ENCODE measurements at regions of chr16 and their contacts with region 1.

Region 1: DNA sequence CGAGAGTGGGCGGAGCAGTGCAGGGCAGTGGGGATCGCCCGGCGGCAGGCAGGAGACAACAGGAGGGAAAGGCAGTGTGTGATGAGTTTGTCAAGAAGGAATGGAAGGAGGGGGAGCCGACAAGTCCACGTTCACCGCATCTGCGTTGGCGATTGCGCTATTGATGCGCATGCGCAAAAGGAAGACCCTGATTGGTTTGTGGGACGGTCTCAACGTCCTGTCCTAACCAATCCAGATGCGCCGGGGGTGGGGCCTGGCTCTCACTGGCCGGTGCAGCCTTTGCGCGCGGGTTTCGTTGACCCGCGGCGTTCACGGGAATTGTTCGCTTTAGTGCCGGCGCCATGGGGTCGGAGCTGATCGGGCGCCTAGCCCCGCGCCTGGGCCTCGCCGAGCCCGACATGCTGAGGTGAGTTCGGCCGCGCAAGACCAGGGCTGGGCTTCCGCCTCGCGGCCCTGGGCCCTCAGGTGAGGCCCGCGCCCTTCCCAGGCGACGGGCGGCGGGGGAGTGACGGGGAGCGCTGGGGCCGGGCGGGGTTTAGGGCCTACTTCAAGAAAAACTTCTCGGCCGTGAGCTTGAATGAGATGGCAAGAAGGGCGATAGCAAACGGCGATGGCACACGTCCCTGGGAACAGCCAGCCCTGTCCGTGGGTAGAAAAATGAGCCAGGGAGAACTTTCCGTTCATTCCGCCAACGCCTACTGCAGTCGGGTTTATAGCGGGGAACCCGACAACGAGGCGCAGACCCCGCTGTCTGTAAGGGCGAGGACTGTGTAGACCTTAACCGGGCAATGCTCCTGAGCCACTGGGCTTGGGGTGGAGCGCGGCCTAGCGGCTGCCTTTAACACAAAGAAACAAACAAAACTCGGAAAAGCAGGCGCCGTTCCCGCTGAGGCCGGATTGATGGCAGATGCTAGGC is at the start of gene ORC6:
- DNase-seq: peak; percentile 97
- ATAC-seq: peak; percentile 87
- H3K4me3 ChIP-seq: peak within 1 kb of the TSS; percentile 85 to 96 (median 92)
- H3K27ac ChIP-seq: peak within 1 kb of the TSS; percentile 89
- H3K4me1 ChIP-seq: peaks cover 64% of the 10 kb centered on the region
- H3K27me3 ChIP-seq: no peaks in the 10 kb centered on the region; a peak in 1 of 5 replicates
- CTCF ChIP-seq: peak; percentile 85
- EP300 ChIP-seq: no peak; a peak in 1 of 4 replicates
- POLR2A ChIP-seq: peak; percentile 87
- RAD21 ChIP-seq: no peak; the same call in 1 of the 2 replicates
- total RNA-seq, gene ORC6: 57.3 and 69.8 TPM in 2 replicates

Region 2: DNA sequence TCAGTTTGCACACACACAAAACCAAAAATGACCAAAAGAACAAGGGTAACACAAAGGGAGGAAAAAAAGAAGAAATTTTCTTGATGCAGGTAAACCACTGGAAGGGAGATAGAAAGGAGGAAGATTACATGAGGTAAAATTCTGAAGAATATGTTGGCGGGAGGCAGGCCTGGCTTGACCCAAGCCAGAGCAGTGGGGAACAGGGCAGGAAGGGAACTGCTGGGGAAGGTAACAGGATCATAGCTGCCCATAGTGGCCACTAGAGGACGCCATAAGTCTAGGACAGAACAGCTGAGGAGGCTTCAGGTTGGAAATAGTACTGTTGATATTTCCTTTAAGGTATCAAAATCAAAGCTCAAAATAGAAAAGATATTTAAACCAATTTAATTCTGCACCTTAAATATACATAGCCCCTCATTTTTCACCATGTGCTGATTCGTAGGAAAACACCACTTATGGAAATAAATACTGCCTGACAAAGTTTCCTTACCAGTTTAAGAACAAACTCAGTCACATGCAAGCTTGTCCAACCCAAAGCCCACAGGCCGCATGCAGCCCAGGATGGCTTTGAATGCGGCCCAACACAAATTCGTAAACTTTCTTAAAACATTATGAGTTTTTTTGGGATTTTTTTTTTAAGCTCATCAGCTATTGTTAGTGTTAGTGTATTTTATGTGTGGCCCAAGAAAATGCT is 16.2 kb before region 1 on chr16:
- CTCF ChIA-PET with region 1: interaction called, 21 read pairs
- POLR2A ChIA-PET with region 1: interaction called, 8 read pairs
- in situ Hi-C with region 1: no loop called
- intact Hi-C with region 1: loop called (anchors 1 kb)
- DNase-seq: peak; percentile 79
- ATAC-seq: peak; percentile 100
- H3K4me3 ChIP-seq: no peak overlapping the region
- H3K27ac ChIP-seq: no peak overlapping the region
- H3K4me1 ChIP-seq: peaks cover 13% of the 10 kb centered on the region
- H3K27me3 ChIP-seq: no peaks in the 10 kb centered on the region
- CTCF ChIP-seq: peak; percentile 94
- EP300 ChIP-seq: no peak
- POLR2A ChIP-seq: no peak
- RAD21 ChIP-seq: peak; percentile 91

Region 3: GRCh38 chr16:46789499-46790414 is 100.1 kb after region 1 on chr16:
- CTCF ChIA-PET with region 1: no interaction called
- POLR2A ChIA-PET with region 1: interaction called, 14 read pairs
- in situ Hi-C with region 1: no loop called
- intact Hi-C with region 1: no loop called
- DNase-seq: peak; percentile 74
- ATAC-seq: peak; percentile 96
- H3K4me3 ChIP-seq: peak overlapping the region; percentile 74 to 93 (median 90)
- H3K27ac ChIP-seq: peak overlapping the region; percentile 71
- H3K4me1 ChIP-seq: peaks cover 37% of the 10 kb centered on the region
- H3K27me3 ChIP-seq: no peaks in the 10 kb centered on the region
- CTCF ChIP-seq: peak; percentile 30
- EP300 ChIP-seq: no peak
- POLR2A ChIP-seq: peak; percentile 90 to 96
- RAD21 ChIP-seq: peak; percentile 83

Region 4: GRCh38 chr16:46801428-46802049 is 111.9 kb after region 1 on chr16:
- CTCF ChIA-PET with region 1: no interaction called
- POLR2A ChIA-PET with region 1: no interaction called
- in situ Hi-C with region 1: loop called (anchors 5 kb)
- intact Hi-C with region 1: loop called (anchors 5 kb)
- DNase-seq: peak; percentile 43
- ATAC-seq: peak; percentile 46; the same call in 1 of the 3 replicates
- H3K4me3 ChIP-seq: no peak overlapping the region
- H3K27ac ChIP-seq: no peak overlapping the region
- H3K4me1 ChIP-seq: no peaks in the 10 kb centered on the region
- H3K27me3 ChIP-seq: no peaks in the 10 kb centered on the region
- CTCF ChIP-seq: peak; percentile 53
- EP300 ChIP-seq: no peak
- POLR2A ChIP-seq: no peak
- RAD21 ChIP-seq: 0 out of 2 replicates have a peak, but pooled peaks have one; percentile 32

Region 5: GRCh38 chr16:46918861-46919792 is 229.5 kb after region 1 on chr16:
- CTCF ChIA-PET with region 1: no interaction called
- POLR2A ChIA-PET with region 1: no interaction called
- in situ Hi-C with region 1: no loop called
- intact Hi-C with region 1: loop called (anchors 10 kb)
- DNase-seq: peak; percentile 97
- ATAC-seq: peak; percentile 88
- H3K4me3 ChIP-seq: no peak overlapping the region
- H3K27ac ChIP-seq: peak overlapping the region; percentile 43
- H3K4me1 ChIP-seq: peaks cover 56% of the 10 kb centered on the region
- H3K27me3 ChIP-seq: no peaks in the 10 kb centered on the region
- CTCF ChIP-seq: peak; percentile 96
- EP300 ChIP-seq: peak; percentile 64 to 67; a peak in 2 of 4 replicates
- POLR2A ChIP-seq: peak in 1 of 2 experiments; percentile 16; a peak in 2 of 4 replicates
- RAD21 ChIP-seq: peak; percentile 72; the same call in 1 of the 2 replicates

Measured in HepG2 (cell line).